Tibial artery (tissue), 4 donors: ENCODE measurements at regions of chr2 and their contacts with region 1.

Region 1: DNA sequence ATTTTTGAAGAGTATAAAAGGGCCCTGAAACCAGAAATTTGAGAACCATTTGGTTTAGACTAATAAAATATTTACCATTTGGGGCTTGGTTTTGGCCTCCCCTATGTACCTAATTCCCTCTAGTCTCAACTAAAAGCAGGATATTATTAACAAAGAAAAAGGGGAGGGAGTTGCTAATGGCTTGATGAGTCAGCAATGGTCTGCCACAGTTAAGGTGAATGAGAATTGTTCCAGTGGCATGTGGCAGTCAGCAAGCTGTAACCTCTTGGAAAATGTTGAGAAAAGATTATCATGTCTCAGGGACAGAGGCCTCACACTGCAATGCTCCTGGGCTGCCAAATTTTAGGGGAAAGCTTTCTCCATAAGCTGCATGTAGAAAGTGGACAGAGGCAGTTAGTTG is 20.1 kb upstream of the SLC39A10 start:
- DNase-seq: no peak
- H3K4me3 ChIP-seq: no peak overlapping the region
- H3K27ac ChIP-seq: no peak overlapping the region
- H3K4me1 ChIP-seq: no peaks in the 10 kb centered on the region
- H3K27me3 ChIP-seq: no peaks in the 10 kb centered on the region
- CTCF ChIP-seq: no peak

Region 2: DNA sequence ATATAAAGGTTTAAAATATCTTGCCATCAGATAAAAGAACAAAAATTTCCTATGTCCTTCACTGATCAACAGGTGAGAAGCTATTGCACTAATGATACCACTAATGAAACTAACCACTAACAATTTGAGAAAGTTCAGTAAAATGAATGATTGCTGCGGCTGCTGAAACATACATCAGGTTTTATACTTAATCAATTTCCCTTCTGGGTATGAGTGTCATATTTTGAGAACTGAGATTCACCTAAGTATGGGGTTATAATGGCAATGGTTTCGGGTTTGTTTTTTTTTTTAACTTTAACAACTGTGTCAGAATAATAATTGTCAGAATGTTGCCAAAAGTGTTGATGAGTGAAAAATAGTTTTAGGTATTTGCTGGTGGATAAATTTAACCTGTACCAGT is 131.2 kb before region 1 on chr2:
- intact Hi-C with region 1: loop called (anchors 10 kb)
- DNase-seq: no peak
- H3K4me3 ChIP-seq: no peak overlapping the region
- H3K27ac ChIP-seq: no peak overlapping the region
- H3K4me1 ChIP-seq: no peaks in the 10 kb centered on the region
- H3K27me3 ChIP-seq: no peaks in the 10 kb centered on the region
- CTCF ChIP-seq: no peak